ENCODE measurements at regions of chr16 and their contacts with region 1.

Region 1: GRCh38 chr16:57462209-57462977 is at the start of gene POLR2C:
- DNase-seq: peak; percentile 81
- H3K4me3 Mint-ChIP-seq: peak within 1 kb of the TSS; percentile 76
- H3K27ac Mint-ChIP-seq: peak within 1 kb of the TSS; percentile 93
- H3K4me1 Mint-ChIP-seq: peaks cover 7% of the 10 kb centered on the region
- H3K27me3 Mint-ChIP-seq: no peaks in the 10 kb centered on the region
- CTCF ChIP-seq: peak; percentile 98
- total RNA-seq, gene POLR2C: 43.3 and 44.8 TPM in 2 replicates

Region 2: GRCh38 chr16:57422026-57422944 is 40.1 kb before region 1 on chr16:
- CTCF ChIA-PET with region 1: interaction called, 7 read pairs
- POLR2A ChIA-PET with region 1: interaction called, 3 read pairs
- intact Hi-C with region 1: loop called (anchors 2 kb)
- DNase-seq: peak; percentile 69
- H3K4me3 Mint-ChIP-seq: no peak overlapping the region
- H3K27ac Mint-ChIP-seq: no peak overlapping the region
- H3K4me1 Mint-ChIP-seq: peaks cover 21% of the 10 kb centered on the region
- H3K27me3 Mint-ChIP-seq: no peaks in the 10 kb centered on the region
- CTCF ChIP-seq: peak; percentile 51

Region 3: DNA sequence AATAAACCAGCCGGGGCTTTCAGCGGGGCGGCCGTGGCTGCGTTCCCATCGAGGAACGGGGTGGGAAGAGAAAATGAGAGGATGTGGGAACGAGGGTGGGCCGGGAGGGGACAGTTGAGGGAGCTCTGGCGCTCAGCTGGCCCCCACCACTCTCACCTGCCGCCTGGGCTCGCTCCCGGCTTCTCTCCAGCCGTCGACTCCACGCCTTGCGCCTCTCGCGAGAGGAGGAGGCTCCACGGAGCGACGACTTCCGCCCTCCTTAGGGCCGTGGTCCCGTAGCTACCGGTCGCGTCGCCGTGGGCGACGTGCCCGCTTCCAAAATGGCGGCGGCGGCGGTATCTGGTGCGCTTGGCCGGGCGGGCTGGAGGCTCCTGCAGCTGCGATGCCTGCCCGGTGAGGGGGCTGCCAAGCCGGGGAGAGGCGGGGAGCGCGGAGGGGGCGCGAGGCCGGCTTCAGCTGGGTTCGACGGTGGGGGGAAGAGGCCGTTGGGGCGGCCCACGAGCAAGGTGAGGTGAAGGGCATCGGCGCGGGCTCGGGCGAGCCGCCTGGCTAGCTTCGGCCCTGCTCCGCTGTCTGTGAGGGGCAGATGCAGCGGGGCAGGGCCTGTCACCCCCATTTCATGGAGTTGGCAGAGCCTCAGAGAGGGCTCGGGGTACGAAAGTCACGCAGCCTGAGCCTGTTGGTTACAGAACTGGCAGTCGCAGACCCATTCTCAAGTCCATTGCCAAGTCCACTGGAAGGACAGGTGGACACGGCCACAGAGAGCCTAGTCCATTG is 15.0 kb before region 1 on chr16 and contains the starts of genes CIAPIN1 and COQ9:
- CTCF ChIA-PET with region 1: interaction called, 23 read pairs
- POLR2A ChIA-PET with region 1: interaction called, 73 read pairs
- intact Hi-C with region 1: no loop called
- DNase-seq: peak; percentile 95
- H3K4me3 Mint-ChIP-seq: peak within 1 kb of the TSS; percentile 90
- H3K27ac Mint-ChIP-seq: peak within 1 kb of the TSS; percentile 97
- H3K4me1 Mint-ChIP-seq: peaks cover 9% of the 10 kb centered on the region
- H3K27me3 Mint-ChIP-seq: no peaks in the 10 kb centered on the region
- CTCF ChIP-seq: no peak
- total RNA-seq, gene CIAPIN1: 99.9 and 105 TPM in 2 replicates
- total RNA-seq, gene COQ9: 72.5 and 80.8 TPM in 2 replicates

Region 4: GRCh38 chr16:57485091-57485915 is 22.9 kb after region 1 on chr16:
- CTCF ChIA-PET with region 1: interaction called, 10 read pairs
- POLR2A ChIA-PET with region 1: interaction called, 6 read pairs
- intact Hi-C with region 1: no loop called
- DNase-seq: no peak
- H3K4me3 Mint-ChIP-seq: peak overlapping the region; percentile 86
- H3K27ac Mint-ChIP-seq: peak overlapping the region; percentile 80
- H3K4me1 Mint-ChIP-seq: peaks cover 5% of the 10 kb centered on the region
- H3K27me3 Mint-ChIP-seq: no peaks in the 10 kb centered on the region
- CTCF ChIP-seq: no peak